Panc1 (cell line): ENCODE measurements at regions of chr7 and their contacts with region 1.

Region 1: GRCh38 chr7:38222481-38223096 is 44.5 kb downstream of the STARD3NL start:
- DNase-seq: peak; percentile 54
- ATAC-seq: peak; percentile 80
- H3K4me3 ChIP-seq: no peak overlapping the region
- H3K27ac ChIP-seq: no peak overlapping the region
- H3K4me1 ChIP-seq: no peaks in the 10 kb centered on the region
- H3K27me3 ChIP-seq: no peaks in the 10 kb centered on the region
- CTCF ChIP-seq: peak; percentile 85; the same call in 1 of the 2 replicates

Region 2: GRCh38 chr7:37901236-37901827 is 321.3 kb before region 1 on chr7:
- CTCF ChIA-PET with region 1: interaction called, 5 read pairs
- POLR2A ChIA-PET with region 1: no interaction called
- in situ Hi-C with region 1: no loop called
- intact Hi-C with region 1: loop called (anchors 5 kb)
- DNase-seq: peak; percentile 28
- ATAC-seq: peak; percentile 62
- H3K4me3 ChIP-seq: no peak overlapping the region
- H3K27ac ChIP-seq: no peak overlapping the region
- H3K4me1 ChIP-seq: no peaks in the 10 kb centered on the region; the same call in 1 of the 2 replicates
- H3K27me3 ChIP-seq: peaks cover 4% of the 10 kb centered on the region; the same call in 1 of the 2 replicates
- CTCF ChIP-seq: peak; percentile 77; the same call in 1 of the 2 replicates

Region 3: GRCh38 chr7:37916673-37917660 is 305.6 kb before region 1 on chr7 and contains the start of gene SFRP4:
- CTCF ChIA-PET with region 1: interaction called, 3 read pairs
- POLR2A ChIA-PET with region 1: no interaction called
- in situ Hi-C with region 1: no loop called
- intact Hi-C with region 1: loop called (anchors 5 kb)
- DNase-seq: peak; percentile 51
- ATAC-seq: peak; percentile 66
- H3K4me3 ChIP-seq: peak within 1 kb of the TSS; percentile 45 to 60
- H3K27ac ChIP-seq: no peak within 1 kb of the TSS
- H3K4me1 ChIP-seq: peaks cover 20% of the 10 kb centered on the region
- H3K27me3 ChIP-seq: peaks cover 22% of the 10 kb centered on the region
- CTCF ChIP-seq: peak; percentile 94
- total RNA-seq, gene SFRP4: 0.74 TPM